ENCODE measurements at regions of chr22 and their contacts with region 1.

Region 1: DNA sequence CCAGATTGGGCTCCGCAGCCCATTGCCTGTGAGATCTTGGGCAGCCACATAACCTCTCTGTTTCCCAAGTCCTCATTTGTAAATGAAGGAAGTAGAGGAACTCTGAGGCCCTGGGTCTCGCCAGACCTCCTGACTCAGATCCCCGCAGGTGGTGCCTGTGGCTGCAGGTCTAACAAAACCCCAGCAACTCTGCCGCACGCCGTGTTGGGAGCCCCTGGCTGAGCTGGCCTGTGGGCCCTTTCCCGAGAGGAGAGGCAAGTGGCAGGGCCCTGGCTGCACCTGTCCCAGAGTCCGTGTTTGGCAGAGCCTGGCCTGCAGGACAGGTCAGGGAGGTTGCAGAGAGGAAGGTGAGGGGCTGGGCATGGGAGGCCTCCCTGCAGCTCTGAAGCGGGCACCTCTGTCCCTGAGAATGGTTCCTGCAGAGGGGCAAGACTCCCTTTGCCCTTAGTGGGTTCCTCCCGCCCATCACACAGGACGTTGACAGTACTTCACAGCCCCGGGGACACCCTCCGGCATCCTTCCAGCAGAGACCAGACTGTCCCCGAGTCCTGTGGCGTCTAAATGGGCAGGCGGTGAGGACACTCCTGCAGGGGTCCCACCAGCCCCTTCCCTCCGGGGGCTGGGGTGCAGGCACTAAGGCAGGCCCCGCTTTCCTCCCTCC is 67.7 kb downstream of the ARHGAP8 start:
- DNase-seq: no peak
- ATAC-seq: no peak; the same call in 1 of the 3 replicates
- H3K4me3 ChIP-seq: no peak overlapping the region
- H3K27ac ChIP-seq: no peak overlapping the region
- H3K4me1 ChIP-seq: no peaks in the 10 kb centered on the region
- H3K27me3 ChIP-seq: peaks cover 0 to 29% of the 10 kb centered on the region in 2 experiments
- CTCF ChIP-seq: no peak
- EP300 ChIP-seq: no peak
- POLR2A ChIP-seq: no peak
- RAD21 ChIP-seq: no peak

Region 2: DNA sequence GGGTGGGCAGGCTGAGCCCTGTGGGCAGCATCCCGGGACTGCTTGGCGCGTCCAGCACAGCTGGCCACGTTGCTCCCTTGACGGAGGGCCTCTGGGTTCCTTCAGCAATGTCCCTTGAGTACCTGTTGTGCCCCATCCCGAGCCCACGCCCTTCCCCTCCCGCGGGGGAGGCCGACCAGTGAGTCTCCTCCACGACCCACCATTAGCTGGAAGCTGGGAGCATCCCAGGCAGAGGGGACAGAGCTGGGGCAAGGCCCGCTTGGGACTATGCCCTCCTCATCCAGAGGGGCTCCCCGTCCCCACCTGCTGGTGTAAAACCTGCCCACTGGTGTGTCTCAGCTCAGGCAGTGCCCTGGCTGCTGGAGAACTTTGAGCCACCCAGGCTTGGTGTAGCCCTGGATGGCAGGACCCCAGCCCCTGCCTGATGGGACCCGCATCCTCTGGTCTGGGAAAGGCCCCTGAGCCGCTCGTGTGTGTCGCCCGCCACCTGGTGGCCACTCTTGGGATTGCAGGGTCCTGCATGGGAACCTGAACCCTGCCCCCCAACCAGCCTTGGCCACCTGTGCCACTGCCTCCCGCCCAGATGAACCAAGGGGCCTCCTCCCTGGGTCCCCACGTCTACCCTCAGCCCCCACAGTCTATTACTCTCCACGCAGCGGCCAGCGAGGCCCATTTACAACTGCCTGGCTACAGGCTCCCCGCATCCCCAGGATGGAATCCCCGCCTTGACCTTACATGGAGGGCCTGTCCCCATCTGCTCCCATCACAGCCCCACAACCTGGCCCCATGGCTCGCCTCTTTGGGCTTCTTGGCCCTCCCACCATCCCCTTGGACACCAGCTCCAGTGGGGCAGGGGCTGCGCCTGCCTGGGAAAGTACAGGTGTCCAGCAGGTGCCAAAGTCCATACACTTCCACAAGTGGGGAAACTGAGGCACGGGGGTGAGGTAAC is 84.3 kb before region 1 on chr22:
- CTCF ChIA-PET with region 1: no interaction called
- POLR2A ChIA-PET with region 1: no interaction called
- in situ Hi-C with region 1: no loop called
- intact Hi-C with region 1: no loop called
- DNase-seq: peak; percentile 44
- ATAC-seq: peak; percentile 60
- H3K4me3 ChIP-seq: no peak overlapping the region
- H3K27ac ChIP-seq: no peak overlapping the region
- H3K4me1 ChIP-seq: peaks cover 37% of the 10 kb centered on the region
- H3K27me3 ChIP-seq: no peaks in the 10 kb centered on the region; a peak in 1 of 5 replicates
- CTCF ChIP-seq: peak; percentile 96
- EP300 ChIP-seq: no peak
- POLR2A ChIP-seq: peak in 1 of 2 experiments; percentile 11; a peak in 2 of 4 replicates
- RAD21 ChIP-seq: peak; percentile 93

Region 3: GRCh38 chr22:44758346-44758973 is 61.6 kb before region 1 on chr22:
- CTCF ChIA-PET with region 1: no interaction called
- POLR2A ChIA-PET with region 1: no interaction called
- in situ Hi-C with region 1: no loop called
- intact Hi-C with region 1: loop called (anchors 2 kb)
- DNase-seq: no peak
- ATAC-seq: no peak
- H3K4me3 ChIP-seq: no peak overlapping the region
- H3K27ac ChIP-seq: no peak overlapping the region
- H3K4me1 ChIP-seq: no peaks in the 10 kb centered on the region
- H3K27me3 ChIP-seq: peaks cover 0 to 12% of the 10 kb centered on the region in 2 experiments; a peak in 3 of 5 replicates
- CTCF ChIP-seq: no peak
- EP300 ChIP-seq: no peak
- POLR2A ChIP-seq: no peak
- RAD21 ChIP-seq: no peak

Region 4: GRCh38 chr22:44907765-44908737 is 88.0 kb after region 1 on chr22:
- CTCF ChIA-PET with region 1: no interaction called
- POLR2A ChIA-PET with region 1: no interaction called
- in situ Hi-C with region 1: no loop called
- intact Hi-C with region 1: no loop called
- DNase-seq: no peak
- ATAC-seq: no peak
- H3K4me3 ChIP-seq: no peak overlapping the region
- H3K27ac ChIP-seq: no peak overlapping the region
- H3K4me1 ChIP-seq: no peaks in the 10 kb centered on the region
- H3K27me3 ChIP-seq: peaks cover 0 to 43% of the 10 kb centered on the region in 2 experiments; a peak in 4 of 5 replicates
- CTCF ChIP-seq: no peak
- EP300 ChIP-seq: no peak
- POLR2A ChIP-seq: no peak
- RAD21 ChIP-seq: no peak

Region 5: GRCh38 chr22:45096256-45096907 is 276.3 kb after region 1 on chr22:
- CTCF ChIA-PET with region 1: interaction called, 11 read pairs
- POLR2A ChIA-PET with region 1: no interaction called
- in situ Hi-C with region 1: no loop called
- intact Hi-C with region 1: no loop called
- DNase-seq: peak; percentile 37
- ATAC-seq: peak; percentile 76
- H3K4me3 ChIP-seq: no peak overlapping the region
- H3K27ac ChIP-seq: no peak overlapping the region
- H3K4me1 ChIP-seq: no peaks in the 10 kb centered on the region
- H3K27me3 ChIP-seq: peaks cover 11 to 62% of the 10 kb centered on the region in 2 experiments
- CTCF ChIP-seq: peak; percentile 81
- EP300 ChIP-seq: no peak
- POLR2A ChIP-seq: no peak
- RAD21 ChIP-seq: no peak